Prostate gland (tissue), 2 donors: ENCODE measurements at regions of chr17 and their contacts with region 1.

Region 1: DNA sequence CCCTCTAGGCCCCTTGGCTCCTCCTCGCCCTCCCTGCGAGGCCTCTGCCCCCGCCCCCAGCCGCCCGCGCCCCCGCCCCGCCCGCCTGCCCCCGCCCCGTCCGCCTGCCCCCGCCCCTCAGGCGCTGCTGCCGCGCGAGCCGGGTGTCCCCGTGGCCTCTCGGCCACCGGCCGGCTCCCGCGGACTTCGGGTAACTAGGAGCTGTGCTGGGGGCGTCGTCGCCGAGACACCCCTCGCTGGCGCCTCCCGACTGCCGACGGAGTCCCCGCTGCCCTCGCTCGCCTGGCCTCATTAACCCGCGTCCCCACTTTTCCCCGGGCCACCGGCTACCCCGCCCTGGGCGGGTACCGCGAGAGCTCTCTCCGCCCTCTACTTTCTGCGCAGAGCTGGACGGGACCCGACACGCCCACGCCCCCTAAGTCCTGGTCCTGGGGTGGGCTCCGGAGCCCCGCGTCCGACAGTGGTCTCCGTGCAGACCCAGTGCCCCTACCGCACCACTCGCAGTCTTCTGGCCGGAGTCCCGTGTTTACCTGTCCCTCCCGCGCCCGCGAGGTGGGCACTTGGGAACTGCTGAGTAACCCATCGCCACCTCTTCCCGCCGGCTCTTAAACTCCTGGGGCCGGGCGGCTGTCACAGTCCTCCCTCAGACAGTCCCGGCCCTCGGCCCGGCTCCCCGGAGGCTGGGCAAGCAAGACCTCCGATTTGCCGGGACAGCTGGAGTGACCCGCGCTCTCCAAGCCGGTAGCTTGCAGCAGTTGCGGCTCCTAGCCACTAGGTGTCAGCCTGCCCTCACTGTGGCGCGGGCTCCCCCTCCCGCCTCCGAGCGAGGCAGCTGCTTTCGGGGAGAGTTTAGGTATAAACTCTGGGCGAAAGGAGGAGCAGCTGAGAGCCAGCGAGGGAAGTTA is at the start of gene TLCD1:
- DNase-seq: peak; percentile 94
- H3K4me3 ChIP-seq: peak within 1 kb of the TSS; percentile 63 to 76
- H3K27ac ChIP-seq: peak within 1 kb of the TSS; percentile 99
- H3K4me1 ChIP-seq: peaks cover 17% of the 10 kb centered on the region
- H3K27me3 ChIP-seq: no peaks in the 10 kb centered on the region
- CTCF ChIP-seq: peak; percentile 99 to 100 (median 100)
- POLR2A ChIP-seq: no peak
- total RNA-seq, gene TLCD1: 5.3 to 19.6 TPM

Region 2: GRCh38 chr17:28743225-28744103 is 17.0 kb after region 1 on chr17 and contains the start of gene TRAF4:
- intact Hi-C with region 1: loop called (anchors 2 kb)
- DNase-seq: peak; percentile 73
- H3K4me3 ChIP-seq: peak within 1 kb of the TSS; percentile 93 to 99
- H3K27ac ChIP-seq: peak within 1 kb of the TSS; percentile 99
- H3K4me1 ChIP-seq: peaks cover 31% of the 10 kb centered on the region
- H3K27me3 ChIP-seq: no peaks in the 10 kb centered on the region
- CTCF ChIP-seq: peak in 3 of 4 experiments; percentile 19 to 65 (median 62)
- POLR2A ChIP-seq: peak; percentile 83
- total RNA-seq, gene TRAF4: 43.1 to 59.8 TPM

Region 3: DNA sequence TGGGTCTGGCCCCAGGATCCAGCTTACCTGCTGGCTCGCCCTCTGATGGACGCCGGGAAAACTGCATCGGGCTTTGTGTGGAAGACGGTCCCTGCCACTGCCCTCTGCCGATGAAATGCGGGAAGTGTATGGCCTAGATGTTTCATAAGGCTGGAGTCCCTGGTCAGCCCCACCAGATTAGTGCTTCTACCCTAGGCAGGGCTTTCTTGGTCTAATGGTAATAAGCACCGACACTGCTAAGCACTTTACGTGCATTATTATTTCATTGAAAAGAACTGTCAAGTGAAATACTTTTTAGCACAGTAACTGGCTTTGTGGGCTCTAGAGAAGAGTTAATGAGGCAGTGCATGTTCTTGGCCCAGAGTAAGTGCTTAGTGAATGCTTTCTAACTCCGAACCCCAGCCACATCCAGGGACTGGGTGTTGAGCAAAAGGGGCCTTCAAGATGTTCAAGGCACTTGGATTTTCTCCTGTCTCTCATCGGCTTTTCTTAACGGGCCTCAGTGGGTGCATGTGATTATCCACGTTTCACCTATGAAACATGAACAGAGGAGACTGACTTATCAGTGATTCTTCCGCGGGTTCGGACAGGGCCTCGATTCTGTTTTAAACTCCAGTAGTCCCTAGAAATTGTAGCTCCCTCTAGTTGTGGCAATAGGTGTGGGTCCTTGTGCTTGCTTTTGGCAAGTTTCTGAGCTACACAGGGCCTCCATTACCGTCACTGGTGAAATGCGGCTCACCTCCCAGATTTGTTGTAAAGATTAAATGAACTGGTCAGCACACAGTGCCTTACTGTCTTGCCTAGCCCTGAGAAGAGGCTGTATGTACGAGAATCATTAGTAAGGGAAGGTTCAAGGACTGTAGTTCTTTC is 23.9 kb after region 1 on chr17:
- intact Hi-C with region 1: loop called (anchors 2 kb)
- DNase-seq: peak; percentile 95
- H3K4me3 ChIP-seq: no peak overlapping the region
- H3K27ac ChIP-seq: peak overlapping the region; percentile 68 to 99
- H3K4me1 ChIP-seq: peaks cover 26% of the 10 kb centered on the region
- H3K27me3 ChIP-seq: no peaks in the 10 kb centered on the region
- CTCF ChIP-seq: peak; percentile 98 to 100 (median 99)
- POLR2A ChIP-seq: peak; percentile 16

Region 4: GRCh38 chr17:28792877-28793661 is 66.6 kb after region 1 on chr17:
- intact Hi-C with region 1: no loop called
- DNase-seq: no peak
- H3K4me3 ChIP-seq: no peak overlapping the region
- H3K27ac ChIP-seq: no peak overlapping the region
- H3K4me1 ChIP-seq: no peaks in the 10 kb centered on the region
- H3K27me3 ChIP-seq: no peaks in the 10 kb centered on the region
- CTCF ChIP-seq: no peak
- POLR2A ChIP-seq: no peak

Region 5: GRCh38 chr17:28916302-28916934 is 189.9 kb after region 1 on chr17:
- intact Hi-C with region 1: loop called (anchors 10 kb)
- DNase-seq: peak; percentile 53
- H3K4me3 ChIP-seq: no peak overlapping the region
- H3K27ac ChIP-seq: no peak overlapping the region
- H3K4me1 ChIP-seq: no peaks in the 10 kb centered on the region
- H3K27me3 ChIP-seq: no peaks in the 10 kb centered on the region
- CTCF ChIP-seq: peak in 3 of 4 experiments; percentile 66 to 78 (median 69)
- POLR2A ChIP-seq: no peak

Region 6: DNA sequence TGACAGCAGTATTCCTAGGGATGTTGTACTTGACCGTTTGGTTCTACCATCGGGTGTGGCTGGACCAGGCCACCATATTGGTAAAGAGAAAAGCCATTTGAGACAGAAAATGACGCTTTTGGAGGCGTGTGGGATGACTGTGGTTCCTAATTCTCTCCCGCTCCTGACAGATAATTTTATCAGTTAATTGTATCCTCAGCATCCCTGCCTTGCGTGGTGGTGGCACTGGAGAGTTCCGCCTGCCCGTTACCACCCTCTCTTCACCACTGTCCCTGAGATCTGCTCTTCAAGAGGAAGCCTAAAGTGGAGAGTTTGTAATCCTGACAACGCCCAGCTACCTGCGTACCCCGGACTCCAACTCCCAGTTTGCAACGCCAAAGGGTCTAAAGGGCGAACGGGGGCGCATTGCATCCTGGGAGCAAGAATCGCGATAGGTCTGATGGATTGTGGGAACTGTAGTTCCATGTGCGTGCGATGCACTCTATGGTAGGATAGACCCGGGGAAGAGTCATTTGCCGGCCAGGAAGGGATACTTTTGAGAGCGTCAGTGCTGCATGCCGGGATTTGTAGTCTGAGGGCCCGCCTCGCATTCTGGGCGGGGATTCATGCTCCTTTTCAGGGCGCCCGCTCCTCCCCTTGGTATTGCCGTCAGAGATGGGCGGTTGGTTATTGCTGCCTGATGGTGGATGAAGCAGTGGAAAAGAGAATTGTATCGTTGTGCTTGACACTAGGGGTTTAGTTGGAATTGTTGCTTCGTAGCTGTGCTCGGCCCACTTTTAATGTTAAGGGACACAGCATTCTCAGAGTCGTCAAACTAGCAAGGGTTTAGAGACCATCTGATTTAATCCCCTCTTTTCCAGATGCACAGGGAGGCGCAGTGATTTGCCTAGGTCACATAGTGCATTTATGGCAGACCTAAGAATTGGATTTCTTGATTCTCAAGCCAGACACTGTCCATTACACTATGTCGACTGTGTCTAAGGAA is 225.8 kb after region 1 on chr17:
- intact Hi-C with region 1: loop called (anchors 5 kb)
- DNase-seq: peak; percentile 98
- H3K4me3 ChIP-seq: peak overlapping the region; percentile 52 to 61
- H3K27ac ChIP-seq: peak overlapping the region; percentile 98 to 99
- H3K4me1 ChIP-seq: peaks cover 4% of the 10 kb centered on the region
- H3K27me3 ChIP-seq: no peaks in the 10 kb centered on the region
- CTCF ChIP-seq: peak in 2 of 4 experiments; percentile 7 to 14
- POLR2A ChIP-seq: peak; percentile 58